Gastrocnemius medialis (tissue), 4 donors: ENCODE measurements at regions of chr1 and their contacts with region 1.

Region 1: GRCh38 chr1:211469938-211470529 is 21.9 kb downstream of the RD3 start:
- DNase-seq: peak; percentile 26 to 55
- ATAC-seq: peak; percentile 35 to 53
- H3K4me3 ChIP-seq: peak overlapping the region in 1 of 4 donors; percentile 34
- H3K27ac ChIP-seq: no peak overlapping the region
- H3K4me1 ChIP-seq: peaks cover 8 to 16% of the 10 kb centered on the region in 2 donors
- H3K27me3 ChIP-seq: no peaks in the 10 kb centered on the region
- CTCF ChIP-seq: peak; percentile 37 to 75 (median 55)
- POLR2A ChIP-seq: no peak

Region 2: DNA sequence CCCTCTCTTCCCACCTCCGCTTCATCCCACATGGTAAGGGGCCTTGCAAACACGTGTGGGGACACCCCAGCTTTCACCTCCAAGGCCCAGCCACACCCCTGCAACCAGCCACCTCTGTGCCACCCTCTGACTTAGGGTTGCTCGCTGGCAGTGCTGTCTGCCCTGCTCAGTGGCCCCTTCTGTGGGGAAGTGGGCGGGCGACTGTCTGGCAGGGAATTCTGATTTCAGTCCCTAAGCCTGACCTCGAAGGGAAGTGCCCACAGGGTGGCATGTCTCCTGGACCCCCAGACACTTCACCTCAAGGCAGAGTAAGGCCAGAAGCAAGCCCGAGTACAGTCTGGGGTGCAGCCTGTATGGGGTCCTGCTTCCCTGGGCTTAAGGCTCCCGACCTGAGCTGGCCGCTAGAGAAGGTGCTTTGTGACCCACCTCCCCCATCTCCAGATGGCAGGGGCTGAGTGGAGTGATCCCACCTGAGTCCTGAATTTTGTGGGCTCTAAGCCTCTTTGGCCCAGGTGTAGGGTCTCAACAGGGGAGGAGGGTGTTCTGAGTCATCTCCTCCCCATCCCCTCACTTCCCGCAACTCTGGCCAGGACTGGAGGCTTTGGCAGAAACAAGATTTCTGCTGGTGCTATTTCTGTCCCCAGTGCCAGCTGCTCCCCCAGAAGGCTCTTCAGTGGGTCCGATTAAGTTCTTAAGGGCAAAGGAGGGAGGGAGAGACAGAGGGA is 14.9 kb after region 1 on chr1:
- in situ Hi-C with region 1: no loop called
- intact Hi-C with region 1: no loop called
- DNase-seq: no peak
- ATAC-seq: no peak
- H3K4me3 ChIP-seq: no peak overlapping the region
- H3K27ac ChIP-seq: no peak overlapping the region
- H3K4me1 ChIP-seq: no peaks in the 10 kb centered on the region
- H3K27me3 ChIP-seq: no peaks in the 10 kb centered on the region
- CTCF ChIP-seq: no peak
- POLR2A ChIP-seq: no peak

Region 3: GRCh38 chr1:211514030-211514754 is 44.2 kb after region 1 on chr1:
- in situ Hi-C with region 1: no loop called
- intact Hi-C with region 1: loop called (anchors 5 kb)
- DNase-seq: peak; percentile 41 to 46
- ATAC-seq: peak; percentile 80 to 82
- H3K4me3 ChIP-seq: no peak overlapping the region
- H3K27ac ChIP-seq: no peak overlapping the region
- H3K4me1 ChIP-seq: no peaks in the 10 kb centered on the region
- H3K27me3 ChIP-seq: peaks cover 0 to 3% (median 0%) of the 10 kb centered on the region in 3 donors
- CTCF ChIP-seq: peak in 4 of 5 experiments; percentile 17 to 68 (median 59)
- POLR2A ChIP-seq: no peak